ENCODE measurements at regions of chr4 and their contacts with region 1.

Region 1: GRCh38 chr4:124111922-124112321 is 600.6 kb downstream of the ANKRD50 start:
- DNase-seq: no peak
- ATAC-seq: peak; percentile 87 to 89

Region 2: GRCh38 chr4:123102897-123103471 is 1008.9 kb before region 1 on chr4:
- intact Hi-C with region 1: loop called (anchors 5 to 10 kb)
- DNase-seq: no peak
- ATAC-seq: peak; percentile 50 to 69

Region 3: GRCh38 chr4:123564758-123565346 is 547.1 kb before region 1 on chr4:
- intact Hi-C with region 1: loop called in 1 of 2 experiments (anchors 5 kb)
- DNase-seq: peak; percentile 33
- ATAC-seq: peak; percentile 90 to 92

Region 4: DNA sequence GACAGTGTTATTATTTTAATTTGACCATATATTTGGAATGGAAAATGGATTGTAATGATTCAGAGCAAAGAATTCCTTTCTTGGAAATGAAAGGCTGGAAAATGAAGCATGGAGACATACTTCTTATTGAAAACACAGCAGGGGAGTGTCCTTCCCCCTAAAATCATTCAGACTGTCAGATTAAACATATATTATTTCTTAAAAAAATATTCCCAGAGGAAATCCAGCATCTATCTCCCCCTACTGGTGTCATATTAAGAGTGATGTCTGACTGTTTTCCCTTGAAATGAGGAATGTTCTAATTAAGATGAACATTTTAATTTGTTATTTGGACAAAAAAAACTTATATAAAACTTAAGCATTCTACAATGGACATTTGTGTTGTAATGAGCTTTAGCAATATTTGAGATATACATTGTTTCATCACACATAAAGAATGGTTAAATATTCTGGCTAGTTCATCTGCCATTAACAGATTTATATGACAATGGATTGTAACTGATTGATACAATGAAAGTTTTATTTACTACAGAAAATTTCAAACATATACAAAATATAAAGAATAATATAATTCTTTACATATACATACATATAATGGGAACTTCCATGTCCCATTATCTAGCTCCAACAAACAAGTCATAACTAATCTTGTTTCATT is 450.7 kb before region 1 on chr4:
- intact Hi-C with region 1: loop called in 1 of 2 experiments (anchors 10 kb)
- DNase-seq: no peak
- ATAC-seq: no peak

Region 5: GRCh38 chr4:123770884-123771283 is 341.0 kb before region 1 on chr4:
- intact Hi-C with region 1: loop called (anchors 2 to 5 kb)
- DNase-seq: no peak
- ATAC-seq: no peak

Region 6: DNA sequence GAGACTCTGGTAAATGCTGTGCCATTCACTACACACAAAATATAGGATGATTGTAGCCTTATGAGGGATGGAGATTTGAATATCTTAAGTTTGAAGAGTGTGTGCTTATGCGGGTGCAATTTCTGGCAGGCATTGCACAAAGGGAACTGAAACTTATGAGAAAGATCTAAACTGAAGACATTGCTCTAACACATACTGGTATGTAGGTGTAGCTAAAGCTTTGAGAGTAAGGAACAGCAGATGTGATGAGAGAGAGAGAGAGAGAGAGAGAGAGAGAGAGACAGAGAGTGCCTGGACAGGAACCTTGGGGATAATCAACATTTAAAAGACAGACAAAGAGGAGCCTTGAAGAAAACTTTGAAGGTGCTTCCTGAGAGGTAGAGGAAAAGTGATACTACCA is 335.7 kb before region 1 on chr4:
- intact Hi-C with region 1: loop called (anchors 2 to 5 kb)
- DNase-seq: no peak
- ATAC-seq: no peak

Region 7: DNA sequence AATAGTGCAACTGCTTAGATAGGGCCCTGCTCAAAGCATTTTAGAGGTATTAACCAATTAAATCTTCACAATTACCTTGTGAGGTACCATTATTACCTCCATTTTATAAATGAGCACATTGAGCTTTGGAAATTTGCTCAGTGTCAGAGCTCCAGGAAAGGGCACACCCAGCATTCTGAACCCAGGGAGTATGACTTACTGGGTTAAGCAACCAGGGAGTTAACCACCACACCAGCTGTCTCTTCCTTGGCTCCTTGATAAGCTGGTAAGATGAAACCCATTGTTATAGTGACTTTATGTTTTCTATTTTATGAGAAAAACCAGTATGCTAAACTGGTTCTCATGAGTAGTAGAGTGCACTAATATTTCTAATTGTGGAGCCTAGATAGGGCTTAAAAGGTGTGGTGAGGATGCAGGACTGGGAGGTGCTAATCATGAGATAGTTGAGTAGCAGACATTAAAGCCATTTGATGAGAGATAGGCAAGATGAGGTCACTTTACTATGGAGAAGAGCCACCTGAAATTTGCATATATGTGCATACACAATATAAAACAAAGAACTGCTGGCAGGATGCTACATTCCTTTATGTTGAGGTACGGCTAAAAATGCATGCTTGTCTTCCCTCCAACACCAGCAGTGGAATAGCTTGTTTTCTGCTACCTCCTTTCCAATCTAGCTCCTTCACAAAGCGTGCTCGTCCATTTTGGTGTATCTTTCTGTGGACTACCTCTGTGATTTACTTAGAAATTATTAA is 159.2 kb before region 1 on chr4:
- intact Hi-C with region 1: no loop called
- DNase-seq: no peak
- ATAC-seq: no peak

Measured in left cardiac atrium (tissue), 4 donors.